Naive thymus-derived CD4-positive, alpha-beta T cell (primary cell): ENCODE measurements at regions of chr6 and their contacts with region 1.

Region 1: DNA sequence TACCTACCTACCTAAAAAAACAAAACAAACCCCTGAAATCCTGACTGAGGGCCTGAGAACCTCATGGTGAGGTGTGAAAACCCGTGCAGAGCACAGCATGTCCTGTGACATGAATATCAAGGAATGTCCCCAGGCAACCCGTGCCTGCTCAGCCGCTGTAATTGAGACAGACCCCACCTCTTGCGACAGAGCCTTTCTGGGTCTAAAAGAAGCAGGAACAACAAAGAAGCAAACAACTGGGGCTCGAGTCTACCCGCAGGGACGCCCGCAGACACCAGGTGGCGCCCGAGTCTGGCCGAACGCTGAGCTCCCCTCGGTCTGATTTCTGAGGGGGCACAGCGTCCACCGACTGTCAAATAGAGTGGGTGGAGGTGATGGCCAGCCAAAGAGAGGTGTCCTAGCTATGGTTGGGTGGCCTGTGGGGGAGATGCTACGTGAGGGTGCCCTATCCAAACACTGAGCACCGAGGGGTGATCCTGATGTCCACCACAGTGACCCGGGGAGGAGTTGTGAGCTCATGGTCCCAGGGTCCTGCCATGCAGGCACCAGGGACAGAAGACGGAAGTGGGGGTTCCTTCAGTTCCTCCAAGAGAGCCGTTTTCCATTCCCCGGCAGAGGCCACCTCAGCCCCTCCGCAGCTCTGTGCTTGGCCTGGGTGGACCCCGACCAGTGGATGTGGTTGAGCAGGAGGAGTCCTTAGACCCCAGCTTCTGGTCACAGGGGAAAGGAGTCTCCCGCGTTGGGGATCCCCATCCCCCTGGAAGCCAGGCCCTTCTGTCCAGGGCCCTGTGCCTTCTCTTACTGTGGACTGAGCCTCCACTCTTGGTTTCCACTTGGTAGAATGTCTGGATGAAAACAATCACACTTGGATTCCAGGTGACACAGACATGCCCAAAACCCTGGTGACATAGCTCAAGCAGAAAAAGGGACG is 268.2 kb downstream of the CDC5L start:
- DNase-seq: peak; percentile 33 to 79 (median 65)
- ATAC-seq: peak; percentile 84
- H3K4me3 ChIP-seq: no peak overlapping the region
- H3K4me3 Mint-ChIP-seq: peak overlapping the region in 8 of 10 donors; percentile 26 to 72 (median 64)
- H3K27ac ChIP-seq: no peak overlapping the region
- H3K27ac Mint-ChIP-seq: peak overlapping the region; percentile 37 to 96 (median 79)
- H3K4me1 ChIP-seq: peaks cover 0 to 9% of the 10 kb centered on the region in 2 donors
- H3K4me1 Mint-ChIP-seq: peaks cover 6 to 16% (median 10%) of the 10 kb centered on the region in 7 donors
- H3K27me3 ChIP-seq: no peaks in the 10 kb centered on the region
- H3K27me3 Mint-ChIP-seq: peaks cover 0 to 12% (median 2%) of the 10 kb centered on the region in 5 donors

Region 2: DNA sequence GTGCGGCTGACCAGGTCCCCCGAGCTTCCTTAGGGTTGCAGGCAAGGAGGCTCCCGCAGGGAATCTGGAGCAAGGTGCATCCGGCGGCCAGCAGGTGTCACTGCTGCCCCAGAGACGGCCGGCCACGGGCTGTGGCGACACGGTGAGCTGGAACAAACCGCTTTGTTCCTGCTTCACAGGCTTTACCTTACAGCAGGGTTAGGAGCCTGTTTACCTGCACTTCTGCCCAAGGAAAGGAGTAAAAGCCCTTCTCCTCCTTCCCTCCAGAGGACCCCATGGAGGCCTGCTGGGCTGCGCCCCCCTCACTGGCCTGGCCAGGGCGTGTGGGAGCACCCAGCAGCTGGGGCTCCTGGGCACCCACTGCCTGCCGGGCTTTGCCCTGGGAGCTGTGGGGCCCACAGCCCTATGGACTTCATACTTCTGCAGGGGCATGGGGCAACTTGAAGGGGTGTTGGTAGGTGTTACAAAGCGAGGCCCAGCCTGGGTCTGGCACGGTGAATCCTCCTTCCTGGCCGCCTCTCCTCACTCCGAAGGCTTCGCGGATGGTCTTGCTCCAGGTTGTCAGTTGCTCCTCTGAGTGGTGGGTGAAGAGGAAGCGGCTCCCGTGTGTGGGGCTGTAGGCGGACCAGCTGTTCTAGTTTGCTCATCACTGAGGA is 179.8 kb before region 1 on chr6:
- CTCF ChIA-PET with region 1: interaction called, 12 read pairs
- POLR2A ChIA-PET with region 1: no interaction called
- intact Hi-C with region 1: loop called (anchors 5 kb)
- DNase-seq: peak; percentile 38 to 78 (median 64)
- ATAC-seq: peak; percentile 82
- H3K4me3 ChIP-seq: no peak overlapping the region
- H3K4me3 Mint-ChIP-seq: no peak overlapping the region
- H3K27ac ChIP-seq: no peak overlapping the region
- H3K27ac Mint-ChIP-seq: no peak overlapping the region
- H3K4me1 ChIP-seq: peaks cover 0 to 9% of the 10 kb centered on the region in 2 donors
- H3K4me1 Mint-ChIP-seq: peaks cover 0 to 2% (median 0%) of the 10 kb centered on the region in 7 donors
- H3K27me3 ChIP-seq: no peaks in the 10 kb centered on the region
- H3K27me3 Mint-ChIP-seq: peaks cover 0 to 8% (median 0%) of the 10 kb centered on the region in 5 donors

Region 3: DNA sequence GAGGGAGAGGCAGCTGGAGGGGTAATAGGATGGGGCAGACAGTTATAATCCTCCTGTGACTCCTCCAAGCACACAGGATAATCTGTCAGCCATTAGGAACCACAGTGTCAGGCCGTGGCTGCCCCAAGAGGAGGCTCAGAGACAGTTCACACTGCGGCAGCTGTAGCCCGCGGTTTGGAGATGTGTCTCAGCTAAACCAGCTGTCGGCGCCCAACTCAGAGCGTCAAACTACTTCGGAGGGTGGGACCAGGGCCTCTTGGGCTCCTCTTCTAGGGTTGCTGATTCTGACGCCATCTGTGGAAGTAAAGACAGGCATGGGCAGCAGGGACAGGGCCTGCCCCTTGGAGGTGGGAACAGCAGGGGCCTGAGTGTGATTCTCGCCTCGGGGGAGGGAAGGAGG is 41.6 kb after region 1 on chr6:
- CTCF ChIA-PET with region 1: no interaction called
- POLR2A ChIA-PET with region 1: no interaction called
- intact Hi-C with region 1: no loop called
- DNase-seq: no peak
- ATAC-seq: peak; percentile 31
- H3K4me3 ChIP-seq: no peak overlapping the region
- H3K4me3 Mint-ChIP-seq: no peak overlapping the region
- H3K27ac ChIP-seq: no peak overlapping the region
- H3K27ac Mint-ChIP-seq: no peak overlapping the region
- H3K4me1 ChIP-seq: no peaks in the 10 kb centered on the region
- H3K4me1 Mint-ChIP-seq: peaks cover 0 to 7% (median 5%) of the 10 kb centered on the region in 7 donors
- H3K27me3 ChIP-seq: no peaks in the 10 kb centered on the region
- H3K27me3 Mint-ChIP-seq: peaks cover 0 to 6% (median 0%) of the 10 kb centered on the region in 5 donors

Region 4: GRCh38 chr6:44932651-44933091 is 277.0 kb after region 1 on chr6:
- CTCF ChIA-PET with region 1: no interaction called
- POLR2A ChIA-PET with region 1: no interaction called
- intact Hi-C with region 1: loop called in 1 of 2 experiments (anchors 10 kb)
- DNase-seq: peak in 7 of 9 donors; percentile 46 to 66 (median 58)
- ATAC-seq: peak; percentile 91
- H3K4me3 ChIP-seq: peak overlapping the region; percentile 37
- H3K4me3 Mint-ChIP-seq: peak overlapping the region; percentile 78 to 98 (median 88)
- H3K27ac ChIP-seq: peak overlapping the region; percentile 71
- H3K27ac Mint-ChIP-seq: peak overlapping the region; percentile 92 to 99 (median 96)
- H3K4me1 ChIP-seq: peaks cover 17 to 42% of the 10 kb centered on the region in 2 donors
- H3K4me1 Mint-ChIP-seq: peaks cover 26 to 67% (median 60%) of the 10 kb centered on the region in 7 donors
- H3K27me3 ChIP-seq: no peaks in the 10 kb centered on the region
- H3K27me3 Mint-ChIP-seq: no peaks in the 10 kb centered on the region

Region 5: DNA sequence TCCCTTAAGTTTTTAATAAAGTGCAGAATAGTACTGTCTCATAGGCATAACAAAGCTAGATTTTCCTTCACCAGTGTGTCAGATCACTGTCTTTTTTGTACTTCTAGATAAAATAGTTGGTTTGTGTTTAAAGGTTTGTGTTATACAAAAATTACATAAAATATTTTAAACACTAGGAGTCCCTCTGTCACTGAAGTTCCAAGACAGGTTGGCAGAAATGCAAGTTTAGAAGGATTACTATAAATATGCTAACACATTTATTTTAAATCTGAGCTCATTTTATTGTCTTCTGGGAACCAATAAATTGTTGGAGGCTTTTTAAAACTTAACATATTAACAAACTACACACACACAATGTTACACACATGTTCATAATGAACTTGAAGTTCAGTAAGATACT is 641.6 kb after region 1 on chr6:
- CTCF ChIA-PET with region 1: interaction called, 4 read pairs
- POLR2A ChIA-PET with region 1: no interaction called
- intact Hi-C with region 1: loop called in 1 of 2 experiments (anchors 1 kb)
- DNase-seq: no peak
- ATAC-seq: no peak
- H3K4me3 ChIP-seq: no peak overlapping the region
- H3K4me3 Mint-ChIP-seq: no peak overlapping the region
- H3K27ac ChIP-seq: no peak overlapping the region
- H3K27ac Mint-ChIP-seq: peak overlapping the region in 6 of 9 donors; percentile 4 to 56 (median 19)
- H3K4me1 ChIP-seq: peaks cover 0 to 14% of the 10 kb centered on the region in 2 donors
- H3K4me1 Mint-ChIP-seq: peaks cover 21 to 74% (median 43%) of the 10 kb centered on the region in 7 donors
- H3K27me3 ChIP-seq: no peaks in the 10 kb centered on the region
- H3K27me3 Mint-ChIP-seq: no peaks in the 10 kb centered on the region

Region 6: DNA sequence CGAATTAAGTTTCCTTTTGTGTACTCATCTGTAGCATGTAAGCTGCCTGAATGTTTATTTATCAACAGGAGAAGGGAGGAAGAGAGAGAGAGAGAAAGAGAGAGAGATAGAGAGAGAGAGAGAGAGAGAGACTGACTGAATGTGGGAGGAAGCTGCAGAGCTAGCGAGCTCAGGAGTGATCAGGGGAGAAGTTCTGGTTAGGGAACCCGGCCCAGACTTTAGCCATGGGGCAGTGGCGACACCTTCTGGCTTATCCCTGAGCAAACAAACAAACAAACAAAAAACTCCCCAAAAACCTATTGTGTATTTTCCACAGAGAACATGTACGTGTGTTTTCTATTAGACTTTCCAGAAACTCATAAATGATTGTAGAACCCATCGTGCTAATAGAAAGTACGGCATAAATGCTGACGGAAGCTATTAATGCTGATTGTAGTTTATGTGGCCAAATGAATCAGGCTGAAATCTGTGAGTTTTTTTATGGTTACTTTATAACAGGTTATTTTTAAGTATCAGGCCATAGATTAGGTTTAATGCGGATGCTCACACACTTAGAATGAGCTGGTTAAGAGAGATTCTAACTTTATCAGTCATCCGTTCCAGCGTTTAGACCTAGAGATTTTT is 1267.2 kb after region 1 on chr6:
- CTCF ChIA-PET with region 1: interaction called, 38 read pairs
- POLR2A ChIA-PET with region 1: no interaction called
- intact Hi-C with region 1: loop called in 1 of 2 experiments (anchors 1 kb)
- DNase-seq: peak in 8 of 9 donors; percentile 13 to 59 (median 36)
- ATAC-seq: peak; percentile 67
- H3K4me3 ChIP-seq: no peak overlapping the region
- H3K4me3 Mint-ChIP-seq: no peak overlapping the region
- H3K27ac ChIP-seq: no peak overlapping the region
- H3K27ac Mint-ChIP-seq: peak overlapping the region in 2 of 9 donors; percentile 28 to 75
- H3K4me1 ChIP-seq: no peaks in the 10 kb centered on the region
- H3K4me1 Mint-ChIP-seq: peaks cover 0 to 42% (median 3%) of the 10 kb centered on the region in 7 donors
- H3K27me3 ChIP-seq: no peaks in the 10 kb centered on the region
- H3K27me3 Mint-ChIP-seq: peaks cover 0 to 11% (median 0%) of the 10 kb centered on the region in 5 donors